ENCODE measurements at regions of chr12 and their contacts with region 1.

Region 1: GRCh38 chr12:3658327-3659163 is 94.4 kb downstream of the CRACR2A start:
- H3K4me3 Mint-ChIP-seq: no peak overlapping the region
- H3K27ac Mint-ChIP-seq: no peak overlapping the region
- H3K4me1 Mint-ChIP-seq: no peaks in the 10 kb centered on the region
- H3K27me3 Mint-ChIP-seq: no peaks in the 10 kb centered on the region

Region 2: GRCh38 chr12:3683670-3684069 is 25.1 kb after region 1 on chr12:
- intact Hi-C with region 1: no loop called
- H3K4me3 Mint-ChIP-seq: no peak overlapping the region
- H3K27ac Mint-ChIP-seq: no peak overlapping the region
- H3K4me1 Mint-ChIP-seq: no peaks in the 10 kb centered on the region
- H3K27me3 Mint-ChIP-seq: no peaks in the 10 kb centered on the region

Region 3: GRCh38 chr12:3777206-3777809 is 118.8 kb after region 1 on chr12:
- intact Hi-C with region 1: loop called (anchors 2 kb)
- H3K4me3 Mint-ChIP-seq: no peak overlapping the region
- H3K27ac Mint-ChIP-seq: no peak overlapping the region
- H3K4me1 Mint-ChIP-seq: no peaks in the 10 kb centered on the region
- H3K27me3 Mint-ChIP-seq: peaks cover 5% of the 10 kb centered on the region

Region 4: GRCh38 chr12:3803865-3804472 is 145.4 kb after region 1 on chr12:
- intact Hi-C with region 1: loop called (anchors 5 kb)
- H3K4me3 Mint-ChIP-seq: no peak overlapping the region
- H3K27ac Mint-ChIP-seq: no peak overlapping the region
- H3K4me1 Mint-ChIP-seq: no peaks in the 10 kb centered on the region
- H3K27me3 Mint-ChIP-seq: no peaks in the 10 kb centered on the region

Region 5: GRCh38 chr12:4044736-4045730 is 386.5 kb after region 1 on chr12:
- intact Hi-C with region 1: no loop called
- H3K4me3 Mint-ChIP-seq: no peak overlapping the region
- H3K27ac Mint-ChIP-seq: no peak overlapping the region
- H3K4me1 Mint-ChIP-seq: peaks cover 10% of the 10 kb centered on the region
- H3K27me3 Mint-ChIP-seq: peaks cover 27% of the 10 kb centered on the region